ENCODE measurements at regions of chr12 and their contacts with region 1.

Region 1: DNA sequence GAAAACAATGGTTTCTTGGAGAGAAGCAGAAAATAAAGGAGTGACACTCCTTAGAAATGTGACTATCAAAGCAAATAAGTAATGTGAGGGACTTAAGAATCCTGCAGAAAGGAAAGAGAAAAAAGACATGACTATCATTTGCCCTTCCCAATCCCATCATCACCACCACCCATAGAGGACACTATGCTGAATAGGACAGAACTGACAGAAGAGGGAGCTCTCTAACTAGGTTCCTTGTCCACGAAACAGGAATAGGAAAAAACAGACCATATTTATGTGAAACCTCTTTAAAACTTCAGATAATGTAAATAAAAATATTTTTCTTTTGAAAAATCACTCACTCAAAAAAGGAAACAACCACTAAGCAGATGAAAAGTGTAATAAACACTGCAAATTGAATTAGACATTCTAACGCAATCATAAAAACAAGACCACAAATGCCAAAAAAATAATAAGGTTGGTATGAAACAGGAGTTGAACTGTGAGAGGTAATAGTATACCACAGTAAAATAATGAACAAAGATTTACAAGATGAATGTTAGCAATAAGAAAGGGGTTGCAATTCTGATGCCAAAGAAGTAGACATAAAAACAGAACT is 24.1 kb downstream of the KLRD1 start:
- DNase-seq: peak; percentile 17 to 56 (median 34)
- ATAC-seq: peak; percentile 81
- H3K4me3 ChIP-seq: no peak overlapping the region
- H3K27ac ChIP-seq: no peak overlapping the region
- H3K4me1 ChIP-seq: no peaks in the 10 kb centered on the region
- H3K27me3 ChIP-seq: no peaks in the 10 kb centered on the region
- CTCF ChIP-seq: peak; percentile 56 to 89 (median 82); a peak in 5 of 6 replicates
- EP300 ChIP-seq: no peak
- POLR2A ChIP-seq: no peak
- RAD21 ChIP-seq: peak; percentile 84 to 91

Region 2: DNA sequence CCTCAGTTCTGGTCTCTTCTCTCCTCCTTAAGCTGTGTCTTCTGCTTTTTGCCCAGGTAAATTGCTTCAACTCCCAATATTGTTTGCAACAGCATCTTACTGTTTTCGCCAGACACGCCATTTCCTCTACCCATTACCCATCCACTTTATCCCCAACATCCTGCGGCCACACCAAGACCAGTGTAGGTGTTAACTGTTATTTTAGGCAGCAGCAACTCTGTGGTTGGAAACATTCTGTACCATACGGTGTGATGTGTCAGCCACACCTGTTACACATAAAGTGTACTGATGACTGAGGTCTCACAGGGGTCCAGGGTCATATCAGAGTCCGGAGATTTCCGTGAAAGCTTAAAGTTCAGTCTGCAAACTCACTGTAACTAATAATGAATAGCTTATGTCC is 45.8 kb before region 1 on chr12:
- CTCF ChIA-PET with region 1: no interaction called
- POLR2A ChIA-PET with region 1: no interaction called
- in situ Hi-C with region 1: no loop called
- intact Hi-C with region 1: no loop called
- DNase-seq: no peak
- ATAC-seq: no peak
- H3K4me3 ChIP-seq: no peak overlapping the region
- H3K27ac ChIP-seq: no peak overlapping the region
- H3K4me1 ChIP-seq: no peaks in the 10 kb centered on the region
- H3K27me3 ChIP-seq: no peaks in the 10 kb centered on the region; a peak in 3 of 5 replicates
- CTCF ChIP-seq: no peak
- EP300 ChIP-seq: no peak
- POLR2A ChIP-seq: no peak
- RAD21 ChIP-seq: no peak

Region 3: DNA sequence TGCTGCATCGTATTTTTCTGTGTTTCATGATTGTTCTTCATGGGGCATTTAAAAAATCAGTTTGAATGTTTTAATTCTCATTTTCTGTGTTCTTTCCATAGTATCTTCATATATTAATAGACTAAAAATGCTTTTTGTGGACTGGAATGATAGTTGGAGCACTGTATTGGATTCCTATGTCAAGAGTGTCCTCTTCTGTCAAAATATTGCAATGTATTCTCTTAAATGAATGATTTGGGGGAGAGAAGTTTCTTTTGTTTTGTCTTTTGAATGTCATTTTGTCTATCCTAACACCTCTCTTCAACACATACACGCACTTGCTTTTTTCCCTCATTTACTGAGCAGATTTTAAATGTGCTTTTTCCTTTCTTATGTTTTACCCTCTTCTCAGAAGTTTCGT is 169.3 kb after region 1 on chr12:
- CTCF ChIA-PET with region 1: interaction called, 3 read pairs
- POLR2A ChIA-PET with region 1: no interaction called
- in situ Hi-C with region 1: no loop called
- intact Hi-C with region 1: loop called (anchors 1 kb)
- DNase-seq: no peak
- ATAC-seq: no peak
- H3K4me3 ChIP-seq: no peak overlapping the region
- H3K27ac ChIP-seq: no peak overlapping the region
- H3K4me1 ChIP-seq: peaks cover 0 to 4% of the 10 kb centered on the region in 2 experiments; a peak in 1 of 5 replicates
- H3K27me3 ChIP-seq: no peaks in the 10 kb centered on the region; a peak in 1 of 5 replicates
- CTCF ChIP-seq: peak in 2 of 3 experiments; percentile 19 to 43; a peak in 3 of 6 replicates
- EP300 ChIP-seq: no peak
- POLR2A ChIP-seq: no peak
- RAD21 ChIP-seq: peak in 1 of 2 experiments; percentile 70; a peak in 2 of 4 replicates

Region 4: DNA sequence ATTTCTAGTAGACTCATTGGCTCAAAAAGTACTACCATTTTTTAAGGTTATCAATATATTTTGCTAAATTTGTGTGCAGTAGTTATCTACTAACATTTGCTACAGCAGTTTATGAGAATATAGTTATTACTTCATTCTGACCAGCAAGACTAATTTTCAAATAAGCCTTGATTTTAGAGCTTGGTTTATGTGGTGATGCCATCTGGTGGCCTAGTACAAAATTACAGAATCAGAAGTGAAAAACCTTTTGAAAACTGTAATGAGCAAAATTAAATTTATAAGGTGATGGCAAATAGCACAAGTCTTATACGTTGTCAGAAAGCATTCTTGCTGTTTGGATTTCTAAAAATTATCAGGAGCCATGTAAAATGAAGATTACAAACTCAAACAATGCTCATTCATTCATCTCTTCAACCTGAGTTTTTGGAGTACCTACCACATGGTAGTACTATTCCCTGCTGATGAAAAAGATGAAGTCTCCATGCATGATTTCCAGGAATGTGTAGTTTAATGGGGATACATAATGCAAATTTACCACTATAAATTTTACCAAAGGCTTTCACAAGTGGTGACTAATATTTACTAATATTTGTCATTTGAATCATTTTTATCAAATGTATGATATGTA is 230.7 kb after region 1 on chr12:
- CTCF ChIA-PET with region 1: interaction called, 21 read pairs
- POLR2A ChIA-PET with region 1: no interaction called
- in situ Hi-C with region 1: no loop called
- intact Hi-C with region 1: loop called (anchors 1 kb)
- DNase-seq: peak; percentile 10 to 41 (median 12)
- ATAC-seq: no peak
- H3K4me3 ChIP-seq: no peak overlapping the region
- H3K27ac ChIP-seq: no peak overlapping the region
- H3K4me1 ChIP-seq: no peaks in the 10 kb centered on the region
- H3K27me3 ChIP-seq: no peaks in the 10 kb centered on the region
- CTCF ChIP-seq: peak in 2 of 3 experiments; percentile 50 to 74; a peak in 3 of 6 replicates
- EP300 ChIP-seq: no peak
- POLR2A ChIP-seq: no peak
- RAD21 ChIP-seq: peak; percentile 80 to 86